Dendritic cell treated with granulocyte-macrophage colony-stimulating factor and Interleukin-4, amounts not matched to agents 40 ng/mL and 50 ng/mL, for 4 days (primary cell): ENCODE measurements at regions of chr22 and their contacts with region 1.

Region 1: GRCh38 chr22:39622881-39623367 is 52.4 kb downstream of the CACNA1I start:
- H3K4me3 Mint-ChIP-seq: no peak overlapping the region
- H3K27ac Mint-ChIP-seq: no peak overlapping the region
- H3K4me1 Mint-ChIP-seq: no peaks in the 10 kb centered on the region
- H3K27me3 Mint-ChIP-seq: peaks cover 23% of the 10 kb centered on the region

Region 2: GRCh38 chr22:40024201-40025061 is 401.5 kb after region 1 on chr22:
- intact Hi-C with region 1: loop called (anchors 2 kb)
- H3K4me3 Mint-ChIP-seq: no peak overlapping the region
- H3K27ac Mint-ChIP-seq: no peak overlapping the region
- H3K4me1 Mint-ChIP-seq: no peaks in the 10 kb centered on the region
- H3K27me3 Mint-ChIP-seq: peaks cover 22% of the 10 kb centered on the region